ENCODE measurements at regions of chr22 and their contacts with region 1.

Region 1: DNA sequence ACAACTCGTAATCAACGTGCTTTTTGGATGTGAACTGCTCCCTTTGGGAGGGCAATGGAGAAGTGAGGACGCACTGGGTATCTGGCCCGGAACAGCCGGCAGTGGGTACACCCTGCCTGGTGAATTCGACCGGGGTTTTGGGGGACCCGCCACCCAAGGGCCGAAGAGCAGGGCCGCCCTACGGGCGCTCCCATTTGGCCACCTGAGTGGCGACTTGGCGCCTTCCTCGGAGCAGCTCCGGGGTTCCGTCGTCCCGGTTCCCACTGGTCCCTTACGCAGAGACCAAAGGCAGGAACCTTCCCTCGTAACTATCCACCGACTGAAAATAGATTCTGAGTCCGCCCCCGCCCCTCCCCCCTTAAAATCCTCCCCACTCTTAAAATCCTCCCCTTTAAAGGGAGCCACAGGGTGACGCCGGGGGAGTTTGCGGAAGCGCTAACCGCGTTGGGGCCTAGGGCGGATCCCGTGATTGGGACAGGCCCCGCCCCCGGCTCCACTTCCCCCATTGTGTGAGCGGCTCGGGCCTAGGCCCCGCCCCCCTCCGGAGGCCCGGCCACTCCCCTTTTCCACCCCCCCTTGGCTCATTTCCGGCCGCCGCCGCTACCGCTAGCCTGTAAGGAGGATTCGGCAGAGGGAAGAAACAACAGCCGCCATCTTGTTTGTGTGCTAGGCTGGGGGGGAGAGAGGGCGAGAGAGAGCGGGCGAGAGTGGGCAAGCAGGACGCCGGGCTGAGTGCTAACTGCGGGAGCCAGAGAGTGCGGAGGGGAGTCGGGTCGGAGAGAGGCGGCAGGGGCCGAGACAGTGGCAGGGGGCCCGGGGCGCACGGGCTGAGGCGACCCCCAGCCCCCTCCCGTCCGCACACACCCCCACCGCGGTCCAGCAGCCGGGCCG is 1.0 kb upstream of the EP300 start:
- DNase-seq: peak; percentile 99
- H3K4me3 ChIP-seq: peak overlapping the region; percentile 83 to 91 (median 90)
- H3K4me3 Mint-ChIP-seq: peak overlapping the region; percentile 90 to 96
- H3K27ac ChIP-seq: peak overlapping the region; percentile 96 to 98
- H3K27ac Mint-ChIP-seq: peak overlapping the region; percentile 95 to 100 (median 98)
- H3K4me1 ChIP-seq: peaks cover 27 to 39% of the 10 kb centered on the region in 2 donors
- H3K4me1 Mint-ChIP-seq: peaks cover 39% of the 10 kb centered on the region
- H3K27me3 ChIP-seq: no peaks in the 10 kb centered on the region
- H3K27me3 Mint-ChIP-seq: peaks cover 0 to 3% (median 0%) of the 10 kb centered on the region in 3 donors
- CTCF ChIP-seq: no peak

Region 2: DNA sequence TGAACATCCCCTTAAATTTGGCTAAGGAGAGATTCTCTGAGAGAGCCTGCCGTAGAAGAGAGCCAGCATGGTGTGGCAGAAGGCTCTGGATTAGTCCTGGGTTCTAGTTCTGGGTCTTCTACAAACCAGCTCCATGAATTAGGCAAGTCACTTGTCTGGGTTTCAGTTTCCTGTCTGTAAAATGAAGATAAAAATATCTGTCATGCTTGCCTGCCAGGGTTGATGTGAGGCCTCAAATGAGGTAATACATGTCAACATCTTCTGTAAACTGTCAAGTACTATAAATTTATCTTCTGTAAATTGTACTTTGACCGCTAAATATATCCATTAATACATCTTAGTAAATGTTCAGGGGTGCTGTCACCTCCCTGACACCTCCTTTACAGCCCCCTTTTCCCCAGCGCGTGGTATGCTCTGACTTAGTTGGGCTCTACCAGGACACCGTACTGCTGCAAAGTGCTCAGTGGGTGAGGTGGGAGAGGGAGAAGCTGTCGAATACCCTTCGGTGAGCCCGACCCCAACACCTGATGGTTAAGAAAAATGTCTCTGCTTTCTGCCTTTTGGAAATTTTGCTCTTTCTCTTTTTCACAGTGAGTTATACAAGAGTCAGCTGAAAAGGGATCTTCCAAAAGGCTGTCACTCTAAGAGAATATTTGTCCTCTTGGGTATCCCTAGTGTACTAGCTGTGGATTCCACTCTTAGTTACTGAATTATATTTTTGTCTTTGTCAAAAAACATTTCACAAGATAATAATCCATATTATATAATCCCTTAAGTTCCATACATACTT is 125.2 kb before region 1 on chr22:
- intact Hi-C with region 1: loop called in 1 of 2 experiments (anchors 5 kb)
- DNase-seq: peak; percentile 43 to 70 (median 47)
- H3K4me3 ChIP-seq: no peak overlapping the region
- H3K4me3 Mint-ChIP-seq: peak overlapping the region in 1 of 2 donors; percentile 18
- H3K27ac ChIP-seq: peak overlapping the region; percentile 62 to 88
- H3K27ac Mint-ChIP-seq: peak overlapping the region; percentile 86 to 98 (median 91)
- H3K4me1 ChIP-seq: peaks cover 24 to 26% of the 10 kb centered on the region in 2 donors
- H3K4me1 Mint-ChIP-seq: peaks cover 22% of the 10 kb centered on the region
- H3K27me3 ChIP-seq: no peaks in the 10 kb centered on the region
- H3K27me3 Mint-ChIP-seq: no peaks in the 10 kb centered on the region
- CTCF ChIP-seq: no peak

Region 3: GRCh38 chr22:41022470-41023298 is 68.7 kb before region 1 on chr22:
- intact Hi-C with region 1: loop called (anchors 5 kb)
- DNase-seq: peak; percentile 79 to 86 (median 83)
- H3K4me3 ChIP-seq: peak overlapping the region; percentile 45 to 94 (median 88)
- H3K4me3 Mint-ChIP-seq: peak overlapping the region; percentile 79 to 88
- H3K27ac ChIP-seq: peak overlapping the region; percentile 87 to 95
- H3K27ac Mint-ChIP-seq: peak overlapping the region; percentile 85 to 97 (median 95)
- H3K4me1 ChIP-seq: peaks cover 21 to 31% of the 10 kb centered on the region in 2 donors
- H3K4me1 Mint-ChIP-seq: peaks cover 30% of the 10 kb centered on the region
- H3K27me3 ChIP-seq: no peaks in the 10 kb centered on the region
- H3K27me3 Mint-ChIP-seq: peaks cover 0 to 3% (median 0%) of the 10 kb centered on the region in 3 donors
- CTCF ChIP-seq: no peak

Region 4: DNA sequence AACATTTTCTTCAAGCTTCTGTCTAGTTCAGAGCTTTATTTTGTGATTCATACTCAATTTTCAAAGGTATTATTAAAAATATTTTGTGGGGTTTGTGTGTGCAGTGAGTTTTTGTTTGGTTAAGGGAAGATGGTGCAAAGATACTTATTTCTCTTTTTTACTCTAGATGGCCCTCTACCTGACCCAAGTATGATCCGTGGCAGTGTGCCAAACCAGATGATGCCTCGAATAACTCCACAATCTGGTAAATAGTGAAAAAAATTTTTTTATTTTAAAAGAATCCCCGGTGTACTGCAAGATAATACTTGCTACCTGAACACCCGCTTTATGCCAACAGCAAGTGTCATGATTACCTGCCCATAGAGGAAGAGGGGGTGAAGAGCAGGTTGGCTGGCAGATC is 55.2 kb after region 1 on chr22:
- intact Hi-C with region 1: no loop called
- DNase-seq: no peak
- H3K4me3 ChIP-seq: no peak overlapping the region
- H3K4me3 Mint-ChIP-seq: no peak overlapping the region
- H3K27ac ChIP-seq: no peak overlapping the region
- H3K27ac Mint-ChIP-seq: no peak overlapping the region
- H3K4me1 ChIP-seq: no peaks in the 10 kb centered on the region
- H3K4me1 Mint-ChIP-seq: no peaks in the 10 kb centered on the region
- H3K27me3 ChIP-seq: no peaks in the 10 kb centered on the region
- H3K27me3 Mint-ChIP-seq: no peaks in the 10 kb centered on the region
- CTCF ChIP-seq: no peak